ENCODE measurements at regions of chr1 and their contacts with region 1.

Region 1: GRCh38 chr1:206537141-206537540 is 29.8 kb downstream of the RASSF5 start:
- DNase-seq: no peak
- H3K4me3 ChIP-seq: no peak overlapping the region
- H3K27ac ChIP-seq: no peak overlapping the region
- H3K4me1 ChIP-seq: peaks cover 14% of the 10 kb centered on the region
- CTCF ChIP-seq: no peak

Region 2: GRCh38 chr1:206439205-206439604 is 97.9 kb before region 1 on chr1:
- CTCF ChIA-PET with region 1: no interaction called
- POLR2A ChIA-PET with region 1: no interaction called
- intact Hi-C with region 1: no loop called
- DNase-seq: no peak
- H3K4me3 ChIP-seq: no peak overlapping the region
- H3K27ac ChIP-seq: no peak overlapping the region
- H3K4me1 ChIP-seq: no peaks in the 10 kb centered on the region
- CTCF ChIP-seq: no peak

Region 3: DNA sequence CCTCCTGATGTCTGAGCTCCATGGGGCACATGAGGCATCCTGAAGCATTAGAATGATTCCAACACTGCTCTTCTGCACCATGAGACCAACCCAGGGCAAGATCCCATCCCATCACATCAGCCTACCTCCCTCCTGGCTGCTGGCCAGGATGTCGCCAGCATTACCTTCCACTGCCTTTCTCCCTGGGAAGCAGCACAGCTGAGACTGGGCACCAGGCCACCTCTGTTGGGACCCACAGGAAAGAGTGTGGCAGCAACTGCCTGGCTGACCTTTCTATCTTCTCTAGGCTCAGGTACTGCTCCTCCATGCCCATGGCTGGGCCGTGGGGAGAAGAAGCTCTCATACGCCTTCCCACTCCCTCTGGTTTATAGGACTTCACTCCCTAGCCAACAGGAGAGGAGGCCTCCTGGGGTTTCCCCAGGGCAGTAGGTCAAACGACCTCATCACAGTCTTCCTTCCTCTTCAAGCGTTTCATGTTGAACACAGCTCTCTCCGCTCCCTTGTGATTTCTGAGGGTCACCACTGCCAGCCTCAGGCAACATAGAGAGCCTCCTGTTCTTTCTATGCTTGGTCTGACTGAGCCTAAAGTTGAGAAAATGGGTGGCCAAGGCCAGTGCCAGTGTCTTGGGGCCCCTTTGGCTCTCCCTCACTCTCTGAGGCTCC is 40.9 kb before region 1 on chr1:
- CTCF ChIA-PET with region 1: no interaction called
- POLR2A ChIA-PET with region 1: no interaction called
- intact Hi-C with region 1: loop called (anchors 5 kb)
- DNase-seq: peak; percentile 20
- H3K4me3 ChIP-seq: no peak overlapping the region
- H3K27ac ChIP-seq: no peak overlapping the region
- H3K4me1 ChIP-seq: peaks cover 33% of the 10 kb centered on the region
- CTCF ChIP-seq: no peak